ENCODE measurements at regions of chr2 and their contacts with region 1.

Region 1: GRCh38 chr2:38315707-38316333 is 61.3 kb downstream of the ATL2 start:
- DNase-seq: peak; percentile 16
- H3K4me3 Mint-ChIP-seq: no peak overlapping the region
- H3K27ac Mint-ChIP-seq: no peak overlapping the region
- H3K4me1 Mint-ChIP-seq: peaks cover 19% of the 10 kb centered on the region
- H3K27me3 Mint-ChIP-seq: no peaks in the 10 kb centered on the region

Region 2: GRCh38 chr2:38508311-38509039 is 192.7 kb after region 1 on chr2:
- intact Hi-C with region 1: loop called (anchors 1 kb)
- DNase-seq: peak; percentile 67
- H3K4me3 Mint-ChIP-seq: no peak overlapping the region
- H3K27ac Mint-ChIP-seq: no peak overlapping the region
- H3K4me1 Mint-ChIP-seq: peaks cover 19% of the 10 kb centered on the region
- H3K27me3 Mint-ChIP-seq: peaks cover 2% of the 10 kb centered on the region

Region 3: DNA sequence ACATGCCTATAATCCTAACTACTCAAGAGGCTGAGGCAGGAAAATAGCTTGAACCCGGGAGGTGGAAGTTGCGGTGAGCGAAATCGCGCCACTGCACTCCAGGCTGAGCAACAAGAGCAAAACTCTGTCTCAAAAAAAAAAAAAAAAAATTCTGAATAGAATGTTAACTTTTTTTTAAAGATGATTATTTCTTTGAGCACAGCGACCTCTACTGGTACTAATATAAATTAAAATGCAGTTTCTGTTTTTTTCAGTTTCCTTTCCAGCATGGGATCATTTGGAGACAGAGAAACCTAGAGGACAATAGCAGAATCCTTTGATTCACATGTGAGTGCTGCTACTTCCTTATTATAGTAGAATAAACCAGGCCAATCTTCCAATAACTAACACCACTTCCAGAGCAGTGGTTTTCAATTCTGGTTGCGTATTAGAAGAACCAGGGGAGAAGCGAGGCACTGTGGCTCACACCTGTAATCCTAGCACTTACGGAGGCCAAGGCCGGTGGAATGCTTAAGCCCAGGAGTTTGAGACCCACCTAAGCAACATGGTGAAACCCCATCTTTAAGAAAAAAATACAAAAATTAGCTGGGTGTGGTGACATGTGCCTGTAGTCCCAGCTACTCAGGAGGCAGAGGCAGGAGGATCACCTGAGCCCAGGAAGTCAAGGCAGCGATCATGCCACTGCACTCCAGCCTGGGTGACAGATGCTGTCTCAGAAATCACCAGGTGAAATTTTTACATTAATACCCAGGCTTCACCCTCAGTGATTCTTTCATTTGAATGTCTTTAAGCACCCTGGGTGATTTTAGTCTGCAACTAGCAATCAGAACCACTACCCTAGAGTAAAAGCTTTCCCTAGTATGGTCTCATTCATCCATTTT is 425.3 kb after region 1 on chr2:
- intact Hi-C with region 1: loop called (anchors 5 kb)
- DNase-seq: no peak
- H3K4me3 Mint-ChIP-seq: no peak overlapping the region
- H3K27ac Mint-ChIP-seq: no peak overlapping the region
- H3K4me1 Mint-ChIP-seq: peaks cover 34% of the 10 kb centered on the region
- H3K27me3 Mint-ChIP-seq: no peaks in the 10 kb centered on the region

Measured in activated T-helper 1 cell treated with anti-CD3 and anti-CD28 coated beads, Interleukin-12 subunit alpha, Interleukin-12 subunit beta, Interleukin-2, Interleukin-4 antibody, amounts not matched to agents 30 ng/mL and 10 ng/mL and 1 ng/mL, durations not matched to agents 14 hours and 24 hours and 36 hours (primary cell).